ENCODE measurements at regions of chr2 and their contacts with region 1.

Region 1: GRCh38 chr2:63841254-63842022 is at the start of gene UGP2:
- DNase-seq: peak; percentile 80
- ATAC-seq: peak; percentile 78
- H3K4me3 ChIP-seq: peak within 1 kb of the TSS; percentile 80 to 84
- H3K27ac ChIP-seq: peak within 1 kb of the TSS; percentile 94
- H3K4me1 ChIP-seq: peaks cover 7 to 18% of the 10 kb centered on the region in 2 experiments; a peak in 3 of 4 replicates
- H3K27me3 ChIP-seq: no peaks in the 10 kb centered on the region
- CTCF ChIP-seq: peak; percentile 17 to 21 (median 20); a peak in 3 of 6 replicates
- POLR2A ChIP-seq: no peak
- RAD21 ChIP-seq: no peak
- total RNA-seq, gene UGP2: 57.1 TPM

Region 2: DNA sequence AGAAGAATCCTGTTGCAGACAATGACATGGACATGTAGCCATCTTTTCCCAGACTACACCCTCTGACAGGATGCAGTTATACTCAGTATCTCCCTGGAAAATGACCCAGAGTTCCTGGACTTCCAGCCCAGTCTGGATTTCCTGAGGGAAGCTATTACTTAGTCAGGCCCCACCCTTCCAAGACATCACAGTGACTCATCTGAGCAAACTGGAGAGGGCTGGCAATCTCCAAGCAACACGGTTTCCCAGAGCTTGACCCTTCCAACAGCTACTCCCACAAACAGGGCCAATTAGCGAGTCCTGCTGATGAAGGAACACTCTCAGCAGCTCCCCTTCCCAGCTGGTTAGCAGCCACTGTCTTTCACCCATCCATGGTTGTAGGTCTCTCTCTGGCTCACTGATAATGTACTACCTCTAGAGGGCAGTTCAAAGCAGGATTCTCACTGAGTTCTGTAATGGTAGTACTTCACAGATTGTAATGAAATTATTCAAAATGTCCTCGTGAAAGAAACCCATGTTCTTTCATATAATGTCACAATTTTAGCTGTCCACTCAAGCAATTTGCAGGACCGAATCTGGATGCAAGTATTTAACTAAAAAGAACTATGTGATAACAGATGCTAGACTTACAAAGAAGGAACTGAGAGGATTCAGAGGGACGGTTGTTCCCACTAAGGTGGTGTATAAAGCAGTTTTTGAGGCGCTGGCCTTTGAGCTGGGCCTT is 142.5 kb before region 1 on chr2:
- CTCF ChIA-PET with region 1: interaction called, 7 read pairs
- POLR2A ChIA-PET with region 1: interaction called, 14 read pairs
- RAD21 ChIA-PET with region 1: interaction called in 1 of 2 experiments, 4 read pairs
- intact Hi-C with region 1: loop called (anchors 5 kb)
- DNase-seq: peak; percentile 76
- ATAC-seq: peak; percentile 98
- H3K4me3 ChIP-seq: peak overlapping the region in 1 of 2 experiments; percentile 3; a peak in 2 of 4 replicates
- H3K27ac ChIP-seq: peak overlapping the region; percentile 12; the same call in 1 of the 2 replicates
- H3K4me1 ChIP-seq: peaks cover 10 to 19% of the 10 kb centered on the region in 2 experiments; a peak in 3 of 4 replicates
- H3K27me3 ChIP-seq: no peaks in the 10 kb centered on the region
- CTCF ChIP-seq: peak; percentile 52 to 75 (median 69); a peak in 5 of 6 replicates
- POLR2A ChIP-seq: peak; percentile 16
- RAD21 ChIP-seq: peak; percentile 74

Region 3: DNA sequence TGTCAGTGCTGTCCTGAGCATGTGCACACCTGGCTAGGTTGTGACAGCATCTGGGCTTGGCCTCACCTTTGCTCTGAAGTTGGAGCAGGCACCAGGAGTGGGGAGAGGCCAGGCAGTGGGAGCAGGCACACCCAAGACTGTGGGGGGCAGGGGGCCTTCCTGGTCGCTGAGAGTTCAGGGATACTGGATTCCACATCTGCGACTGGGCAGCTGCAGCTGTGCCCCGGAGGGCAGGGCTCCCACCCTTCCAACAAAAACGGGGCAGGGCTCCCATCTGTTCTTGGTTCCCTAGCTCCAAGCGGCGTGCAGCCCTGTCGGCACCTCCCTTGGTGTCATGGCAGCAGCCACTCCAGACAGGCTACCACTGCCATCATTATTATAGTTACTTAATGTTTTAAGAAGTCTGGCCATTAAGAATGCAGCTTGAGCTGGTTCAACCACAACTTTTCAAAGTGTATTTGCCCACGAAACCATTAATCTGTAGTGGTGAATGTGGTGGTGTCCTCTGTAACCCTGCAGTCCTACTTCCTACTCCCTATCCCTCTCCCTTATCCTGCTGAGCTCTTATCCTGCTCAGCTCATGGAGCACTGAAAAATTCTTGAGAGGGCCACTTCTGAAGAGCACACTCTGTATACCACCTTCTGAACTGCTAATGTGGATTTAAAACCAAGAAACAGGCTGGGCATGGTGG is 1336.5 kb after region 1 on chr2:
- CTCF ChIA-PET with region 1: no interaction called
- POLR2A ChIA-PET with region 1: no interaction called
- RAD21 ChIA-PET with region 1: no interaction called
- intact Hi-C with region 1: no loop called
- DNase-seq: no peak
- ATAC-seq: no peak
- H3K4me3 ChIP-seq: no peak overlapping the region
- H3K27ac ChIP-seq: no peak overlapping the region
- H3K4me1 ChIP-seq: peaks cover 2 to 17% of the 10 kb centered on the region in 2 experiments; a peak in 3 of 4 replicates
- H3K27me3 ChIP-seq: no peaks in the 10 kb centered on the region
- CTCF ChIP-seq: no peak
- POLR2A ChIP-seq: no peak
- RAD21 ChIP-seq: no peak